GM12878 (cell line): ENCODE measurements at regions of chr17 and their contacts with region 1.

Region 1: GRCh38 chr17:5031365-5032082 is 3.7 kb downstream of the SLC52A1 start:
- DNase-seq: peak; percentile 55
- ATAC-seq: peak; percentile 92
- H3K4me3 ChIP-seq: peak overlapping the region; percentile 46
- H3K27ac ChIP-seq: peak overlapping the region; percentile 66
- H3K4me1 ChIP-seq: peaks cover 14% of the 10 kb centered on the region
- H3K27me3 ChIP-seq: no peaks in the 10 kb centered on the region
- CTCF ChIP-seq: peak; percentile 67 to 81 (median 69)
- EP300 ChIP-seq: no peak
- POLR2A ChIP-seq: no peak; the same call in 1 of the 2 replicates
- RAD21 ChIP-seq: peak; percentile 70

Region 2: DNA sequence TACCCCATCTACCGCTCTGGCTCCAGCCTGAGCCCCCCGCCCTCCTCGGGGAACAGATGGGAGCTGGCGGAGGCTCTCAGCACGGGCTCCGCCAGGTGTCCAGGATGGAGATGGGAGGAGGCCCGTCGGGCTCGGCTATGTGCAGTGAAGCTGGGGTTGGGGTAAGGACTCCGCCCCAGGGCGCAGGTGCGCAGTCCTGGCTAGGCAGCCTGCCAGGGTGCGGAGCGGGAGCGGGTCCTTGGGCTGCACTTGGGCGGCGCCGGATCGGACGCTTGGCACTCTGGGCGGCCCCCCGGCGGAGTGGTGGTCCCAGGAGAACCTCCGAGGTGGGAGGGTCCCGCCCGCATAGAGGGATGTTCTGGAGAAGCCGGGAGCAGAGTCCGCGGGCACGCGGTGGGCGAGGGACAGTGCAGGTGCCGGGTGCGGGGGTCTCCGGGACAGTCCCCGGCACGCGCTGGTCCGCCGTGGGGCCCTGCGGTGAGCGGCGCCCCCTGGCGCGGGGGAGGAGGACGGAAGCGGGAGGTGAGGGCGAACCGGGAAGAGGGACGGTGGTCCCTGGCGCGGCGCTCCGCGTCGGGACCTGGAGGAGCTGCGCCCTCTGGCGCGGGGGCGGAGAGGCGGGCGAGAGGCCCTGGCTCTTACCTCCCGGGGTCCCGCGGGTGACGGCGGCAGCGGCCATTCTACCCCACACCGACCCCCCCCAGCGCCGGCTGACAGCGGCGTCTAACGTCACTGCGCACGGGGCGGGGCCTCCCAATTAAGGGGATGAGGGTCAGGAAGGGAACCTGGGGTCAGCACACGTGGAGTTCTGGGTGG is 44.4 kb before region 1 on chr17 and contains the start of gene CAMTA2:
- CTCF ChIA-PET with region 1: interaction called, 17 read pairs
- POLR2A ChIA-PET with region 1: interaction called, 5 read pairs
- RAD21 ChIA-PET with region 1: no interaction called
- SMC1A ChIA-PET with region 1: interaction called, 4 read pairs
- in situ Hi-C with region 1: no loop called
- intact Hi-C with region 1: no loop called
- DNase-seq: no peak
- ATAC-seq: peak; percentile 92
- H3K4me3 ChIP-seq: peak within 1 kb of the TSS; percentile 74
- H3K27ac ChIP-seq: peak within 1 kb of the TSS; percentile 90
- H3K4me1 ChIP-seq: peaks cover 19% of the 10 kb centered on the region
- H3K27me3 ChIP-seq: no peaks in the 10 kb centered on the region
- CTCF ChIP-seq: peak; percentile 61 to 66 (median 66); a peak in 5 of 6 replicates
- EP300 ChIP-seq: no peak
- POLR2A ChIP-seq: peak; percentile 89
- RAD21 ChIP-seq: peak; percentile 33
- polyA plus RNA-seq, gene CAMTA2: 0.42 to 1.7 TPM

Region 3: DNA sequence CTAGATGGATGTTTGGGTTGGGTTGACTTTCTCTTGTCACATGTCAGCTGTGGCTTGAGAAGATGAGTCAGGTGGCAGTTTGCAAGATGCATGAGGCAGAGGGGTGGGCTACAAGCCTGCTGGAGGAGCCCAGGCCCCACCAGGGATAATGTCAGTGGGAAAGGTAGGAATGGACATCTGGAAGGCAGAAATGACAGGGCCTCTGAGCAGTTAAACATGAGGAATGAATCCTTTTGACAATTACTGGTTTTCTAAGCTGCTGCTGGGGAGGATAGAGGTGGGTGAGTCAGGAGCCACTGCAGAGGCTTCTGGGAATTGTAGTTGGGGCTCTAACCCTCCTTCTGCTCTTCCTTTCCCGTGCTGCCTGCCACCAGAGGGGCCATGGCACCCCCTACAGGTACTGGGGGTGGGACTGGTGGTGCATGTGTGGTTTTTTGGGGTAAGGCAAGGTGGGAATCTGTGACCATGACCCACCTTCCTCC is 12.0 kb before region 1 on chr17:
- CTCF ChIA-PET with region 1: interaction called, 19 read pairs
- POLR2A ChIA-PET with region 1: interaction called, 17 read pairs
- RAD21 ChIA-PET with region 1: interaction called, 3 read pairs
- SMC1A ChIA-PET with region 1: interaction called, 10 read pairs
- in situ Hi-C with region 1: no loop called
- intact Hi-C with region 1: no loop called
- DNase-seq: no peak
- ATAC-seq: peak; percentile 24; the same call in 1 of the 3 replicates
- H3K4me3 ChIP-seq: no peak overlapping the region
- H3K27ac ChIP-seq: no peak overlapping the region
- H3K4me1 ChIP-seq: peaks cover 12% of the 10 kb centered on the region
- H3K27me3 ChIP-seq: no peaks in the 10 kb centered on the region
- CTCF ChIP-seq: peak; percentile 25 to 40 (median 31); a peak in 4 of 6 replicates
- EP300 ChIP-seq: no peak
- POLR2A ChIP-seq: no peak
- RAD21 ChIP-seq: peak; percentile 51

Region 4: GRCh38 chr17:5210614-5211252 is 179.2 kb after region 1 on chr17:
- CTCF ChIA-PET with region 1: no interaction called
- POLR2A ChIA-PET with region 1: no interaction called
- RAD21 ChIA-PET with region 1: no interaction called
- SMC1A ChIA-PET with region 1: no interaction called
- in situ Hi-C with region 1: no loop called
- intact Hi-C with region 1: no loop called
- DNase-seq: peak; percentile 73
- ATAC-seq: peak; percentile 70
- H3K4me3 ChIP-seq: no peak overlapping the region
- H3K27ac ChIP-seq: peak overlapping the region; percentile 88
- H3K4me1 ChIP-seq: peaks cover 53% of the 10 kb centered on the region
- H3K27me3 ChIP-seq: no peaks in the 10 kb centered on the region
- CTCF ChIP-seq: no peak
- EP300 ChIP-seq: peak in 1 of 2 experiments; percentile 63; a peak in 2 of 4 replicates
- POLR2A ChIP-seq: no peak
- RAD21 ChIP-seq: no peak